K562 (cell line): ENCODE measurements at regions of chr15 and their contacts with region 1.

Region 1: GRCh38 chr15:35289024-35289617 is 204.0 kb upstream of the NANOGP8 start:
- DNase-seq: peak; percentile 19 to 58 (median 34)
- ATAC-seq: peak; percentile 75
- H3K4me3 ChIP-seq: no peak overlapping the region
- H3K27ac ChIP-seq: no peak overlapping the region
- H3K4me1 ChIP-seq: peaks cover 0 to 3% of the 10 kb centered on the region in 2 experiments; a peak in 1 of 5 replicates
- H3K27me3 ChIP-seq: no peaks in the 10 kb centered on the region
- CTCF ChIP-seq: peak; percentile 55 to 82 (median 71)
- EP300 ChIP-seq: no peak
- POLR2A ChIP-seq: no peak
- RAD21 ChIP-seq: peak; percentile 83 to 90

Region 2: DNA sequence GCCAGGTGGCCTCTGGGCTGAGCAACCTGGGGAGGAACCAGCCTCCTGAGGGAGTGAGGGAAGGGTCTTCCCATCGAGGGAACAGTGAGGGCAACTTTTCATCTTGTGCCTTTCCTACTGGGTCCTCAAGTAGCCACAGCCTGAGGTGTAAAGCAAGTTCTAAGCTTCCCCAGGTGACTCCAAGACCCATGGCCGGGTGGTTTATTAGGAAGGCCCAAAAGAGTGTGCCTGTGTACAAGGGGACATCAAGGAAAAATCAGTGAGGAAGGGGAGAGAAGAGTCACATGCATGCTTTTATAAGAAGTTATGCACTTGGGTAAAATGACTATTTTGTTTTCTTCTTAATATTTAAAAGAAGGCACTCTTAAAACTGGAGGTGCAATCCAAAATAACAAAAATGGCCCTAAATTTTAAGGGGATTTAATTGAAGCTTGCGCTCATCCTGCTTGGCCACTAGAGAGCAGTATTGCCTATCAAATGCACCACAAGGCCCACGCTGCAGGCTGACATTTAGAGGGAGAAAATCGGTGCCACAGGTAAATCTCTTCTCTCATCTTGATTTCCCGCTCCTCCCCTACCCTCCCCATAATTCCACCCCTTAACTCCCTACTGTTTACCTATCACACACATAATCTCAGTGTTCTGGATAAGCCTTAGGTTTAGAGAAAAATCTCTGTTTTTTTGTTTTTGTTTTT is 210.8 kb before region 1 on chr15:
- CTCF ChIA-PET with region 1: interaction called, 6 read pairs
- POLR2A ChIA-PET with region 1: interaction called, 3 read pairs
- in situ Hi-C with region 1: loop called (anchors 25 kb)
- intact Hi-C with region 1: loop called (anchors 2 kb)
- DNase-seq: peak; percentile 50 to 74 (median 61)
- ATAC-seq: peak; percentile 84
- H3K4me3 ChIP-seq: no peak overlapping the region
- H3K27ac ChIP-seq: no peak overlapping the region
- H3K4me1 ChIP-seq: no peaks in the 10 kb centered on the region
- H3K27me3 ChIP-seq: no peaks in the 10 kb centered on the region
- CTCF ChIP-seq: peak; percentile 72 to 93 (median 76)
- EP300 ChIP-seq: no peak
- POLR2A ChIP-seq: no peak
- RAD21 ChIP-seq: peak; percentile 92 to 96

Region 3: DNA sequence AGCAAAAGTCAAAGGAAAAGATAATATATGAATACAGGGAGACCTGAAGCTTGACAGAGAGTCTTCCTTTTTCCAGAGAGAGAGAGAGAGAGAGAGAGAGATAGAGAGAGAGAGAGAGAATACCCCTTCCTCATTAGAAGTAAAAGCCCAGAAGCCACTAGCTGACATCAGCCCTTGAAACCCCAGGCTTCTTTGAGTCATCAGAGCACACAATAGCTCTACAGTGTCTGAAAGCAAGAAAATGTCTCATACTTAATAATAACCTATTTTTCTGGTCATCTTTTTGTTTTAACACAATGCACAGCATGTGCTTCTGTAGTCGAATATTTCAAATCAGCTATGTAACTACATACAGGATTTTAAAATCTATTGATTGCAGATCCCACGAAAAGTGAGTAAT is 94.8 kb before region 1 on chr15:
- CTCF ChIA-PET with region 1: no interaction called
- POLR2A ChIA-PET with region 1: no interaction called
- in situ Hi-C with region 1: no loop called
- intact Hi-C with region 1: no loop called
- DNase-seq: no peak
- ATAC-seq: no peak
- H3K4me3 ChIP-seq: no peak overlapping the region
- H3K27ac ChIP-seq: no peak overlapping the region
- H3K4me1 ChIP-seq: no peaks in the 10 kb centered on the region
- H3K27me3 ChIP-seq: no peaks in the 10 kb centered on the region
- CTCF ChIP-seq: no peak
- EP300 ChIP-seq: no peak
- POLR2A ChIP-seq: no peak
- RAD21 ChIP-seq: no peak

Region 4: GRCh38 chr15:35312344-35312743 is 23.2 kb after region 1 on chr15:
- CTCF ChIA-PET with region 1: no interaction called
- POLR2A ChIA-PET with region 1: no interaction called
- in situ Hi-C with region 1: no loop called
- intact Hi-C with region 1: no loop called
- DNase-seq: no peak
- ATAC-seq: no peak
- H3K4me3 ChIP-seq: no peak overlapping the region
- H3K27ac ChIP-seq: no peak overlapping the region
- H3K4me1 ChIP-seq: peaks cover 0 to 7% of the 10 kb centered on the region in 2 experiments; a peak in 3 of 5 replicates
- H3K27me3 ChIP-seq: no peaks in the 10 kb centered on the region
- CTCF ChIP-seq: no peak
- EP300 ChIP-seq: no peak
- POLR2A ChIP-seq: no peak
- RAD21 ChIP-seq: no peak

Region 5: DNA sequence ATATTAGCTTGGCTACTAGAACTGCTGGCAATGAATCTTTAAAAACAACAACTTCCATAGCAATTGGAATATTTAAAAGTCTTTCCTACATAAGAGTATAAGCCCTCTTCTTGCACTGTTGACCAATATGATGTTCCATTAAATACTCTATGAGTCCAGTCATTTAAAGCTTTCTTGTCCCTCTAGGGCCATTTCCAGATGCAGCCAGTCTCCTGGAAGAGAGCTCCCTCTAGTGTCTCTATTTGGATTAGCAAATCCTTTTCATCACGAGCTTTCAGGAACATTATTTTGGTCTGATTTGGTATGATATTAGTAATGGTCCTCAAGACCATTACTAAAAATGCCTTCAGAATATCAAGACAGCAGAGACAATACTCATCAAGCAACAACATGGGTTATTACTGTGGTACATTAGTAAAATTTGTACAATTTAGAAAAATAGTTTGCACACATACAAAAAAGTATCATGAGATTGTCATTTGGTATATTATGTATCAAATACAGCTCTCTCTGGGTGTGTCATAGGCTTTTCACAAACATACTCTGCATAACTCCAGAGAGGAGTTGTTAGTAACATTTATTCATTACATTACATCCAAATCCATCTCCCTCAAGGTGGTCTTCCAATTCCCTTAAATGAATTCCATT is 155.6 kb after region 1 on chr15:
- CTCF ChIA-PET with region 1: interaction called, 19 read pairs
- POLR2A ChIA-PET with region 1: no interaction called
- in situ Hi-C with region 1: no loop called
- intact Hi-C with region 1: loop called (anchors 1 kb)
- DNase-seq: peak; percentile 28 to 60 (median 38)
- ATAC-seq: peak; percentile 65
- H3K4me3 ChIP-seq: no peak overlapping the region
- H3K27ac ChIP-seq: no peak overlapping the region
- H3K4me1 ChIP-seq: no peaks in the 10 kb centered on the region
- H3K27me3 ChIP-seq: no peaks in the 10 kb centered on the region
- CTCF ChIP-seq: peak; percentile 73 to 92 (median 77)
- EP300 ChIP-seq: no peak
- POLR2A ChIP-seq: no peak
- RAD21 ChIP-seq: peak; percentile 90 to 92

Region 6: DNA sequence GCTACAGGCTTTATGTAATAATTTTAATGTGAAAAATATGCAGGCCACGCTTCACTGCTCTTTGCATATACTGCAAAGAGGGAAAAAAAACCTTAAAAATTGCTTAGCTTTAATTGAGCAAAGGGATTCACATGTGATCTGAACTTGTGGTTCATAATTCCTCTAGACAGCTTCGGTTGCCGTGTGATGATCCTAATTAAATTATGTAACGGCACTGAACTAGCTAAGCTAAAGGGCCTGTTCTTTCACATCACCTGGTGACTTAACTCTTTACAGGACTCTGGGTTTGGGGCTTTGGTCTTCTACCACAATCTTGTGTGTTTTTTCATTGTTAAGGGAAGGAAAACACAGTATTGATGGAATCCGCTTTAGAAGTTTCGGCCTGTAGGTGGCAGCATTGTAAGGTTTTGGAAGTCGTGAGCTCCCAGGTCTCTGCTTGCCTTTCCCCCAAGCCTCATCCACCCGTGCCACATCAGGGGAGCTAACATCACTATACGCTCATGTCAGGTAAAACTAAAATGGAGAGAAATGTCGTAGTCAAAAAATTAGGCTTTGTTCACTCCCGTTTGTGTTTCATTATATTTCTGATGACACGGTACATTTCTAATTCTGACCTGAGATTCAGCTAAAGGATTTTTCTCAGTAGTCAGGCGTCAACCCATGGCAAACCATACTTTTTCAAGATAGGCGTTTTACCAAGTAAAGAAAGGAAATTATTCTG is 462.5 kb after region 1 on chr15:
- CTCF ChIA-PET with region 1: no interaction called
- POLR2A ChIA-PET with region 1: no interaction called
- in situ Hi-C with region 1: no loop called
- intact Hi-C with region 1: loop called (anchors 2 kb)
- DNase-seq: peak; percentile 53 to 79 (median 55)
- ATAC-seq: peak; percentile 93
- H3K4me3 ChIP-seq: no peak overlapping the region
- H3K27ac ChIP-seq: no peak overlapping the region
- H3K4me1 ChIP-seq: no peaks in the 10 kb centered on the region
- H3K27me3 ChIP-seq: no peaks in the 10 kb centered on the region
- CTCF ChIP-seq: peak; percentile 60 to 75 (median 68)
- EP300 ChIP-seq: no peak
- POLR2A ChIP-seq: no peak
- RAD21 ChIP-seq: peak; percentile 48 to 69

Region 7: DNA sequence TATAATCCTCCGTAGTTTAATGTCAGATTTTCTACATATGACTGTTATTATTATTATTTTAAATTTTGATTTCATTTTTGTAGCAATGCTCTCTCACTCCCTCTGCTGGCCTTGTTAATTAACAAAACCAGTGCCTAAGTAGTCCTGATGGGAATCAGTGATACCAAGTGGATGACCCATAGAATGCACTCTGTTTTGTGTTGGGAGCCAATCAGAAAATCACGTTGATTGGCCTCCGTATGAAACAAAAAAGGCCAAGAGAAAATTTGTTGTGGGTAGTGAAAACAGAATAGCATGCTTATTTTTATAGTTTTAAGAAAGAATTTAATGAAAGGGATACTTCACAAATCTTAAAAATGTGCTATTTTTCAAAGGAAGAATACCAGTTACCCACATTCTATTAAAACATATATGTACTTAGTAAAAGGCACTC is 1845.6 kb after region 1 on chr15:
- CTCF ChIA-PET with region 1: no interaction called
- POLR2A ChIA-PET with region 1: no interaction called
- in situ Hi-C with region 1: loop called (anchors 25 kb)
- intact Hi-C with region 1: no loop called
- DNase-seq: peak; percentile 50 to 78 (median 63)
- ATAC-seq: peak; percentile 92
- H3K4me3 ChIP-seq: no peak overlapping the region
- H3K27ac ChIP-seq: no peak overlapping the region
- H3K4me1 ChIP-seq: no peaks in the 10 kb centered on the region
- H3K27me3 ChIP-seq: no peaks in the 10 kb centered on the region; a peak in 1 of 5 replicates
- CTCF ChIP-seq: peak; percentile 44 to 88 (median 76); a peak in 5 of 6 replicates
- EP300 ChIP-seq: no peak
- POLR2A ChIP-seq: no peak
- RAD21 ChIP-seq: peak; percentile 43 to 56